ENCODE measurements at regions of chrX and their contacts with region 1.

Region 1: GRCh38 chrX:65841263-65841662 is 173.8 kb downstream of the MSN start:
- DNase-seq: no peak
- ATAC-seq: no peak
- H3K4me3 ChIP-seq: no peak overlapping the region
- H3K27ac ChIP-seq: no peak overlapping the region
- H3K4me1 ChIP-seq: no peaks in the 10 kb centered on the region
- H3K27me3 ChIP-seq: peaks cover 0 to 31% (median 0%) of the 10 kb centered on the region in 9 donors
- CTCF ChIP-seq: no peak
- POLR2A ChIP-seq: no peak

Region 2: DNA sequence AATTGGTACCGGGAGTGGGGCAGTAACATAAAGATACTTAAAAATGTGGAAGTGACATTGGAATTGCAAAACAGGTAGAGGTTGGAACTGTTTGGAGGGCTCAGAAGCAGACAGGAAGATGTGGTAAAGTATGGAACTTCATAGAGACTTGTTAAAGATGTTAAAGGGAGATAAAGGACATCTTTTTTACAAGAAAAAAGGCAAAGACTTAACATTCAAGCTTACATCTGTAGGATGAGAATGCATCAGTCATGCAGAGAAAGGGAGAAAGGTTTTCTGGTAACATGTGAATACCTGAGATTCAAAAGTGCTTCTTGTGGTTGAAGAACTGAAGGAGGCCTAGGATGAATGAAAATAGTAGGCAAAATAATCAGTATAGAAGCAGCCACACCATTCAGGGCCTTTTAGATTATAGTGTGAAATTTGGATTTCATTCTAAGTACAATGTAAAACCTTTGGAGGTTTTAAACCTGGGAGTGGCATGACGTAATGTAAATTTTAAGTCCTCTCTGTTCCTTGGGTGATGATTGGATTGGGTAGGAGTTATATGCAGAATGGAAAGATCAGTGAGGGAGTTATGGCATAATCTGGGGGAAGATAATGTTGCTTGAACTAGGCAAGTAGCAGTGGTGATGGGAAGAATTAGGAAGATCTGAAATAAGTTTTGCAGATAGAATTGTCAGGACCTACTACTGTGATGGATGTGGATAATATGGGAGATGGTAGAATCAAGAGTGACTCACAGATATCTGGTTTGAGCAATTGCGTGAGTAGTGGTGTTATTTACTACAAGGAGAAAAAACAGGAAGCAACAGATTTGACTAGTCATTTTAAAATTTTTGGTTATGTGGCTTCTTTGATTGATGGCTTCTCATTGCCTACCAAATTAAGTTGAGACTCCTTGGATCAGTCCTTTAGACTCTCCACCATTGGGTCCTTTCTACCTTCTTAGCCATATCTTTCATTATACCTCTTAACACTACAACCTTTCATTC is 59.9 kb after region 1 on chrX:
- intact Hi-C with region 1: loop called in 1 of 10 experiments (anchors 10 kb)
- DNase-seq: no peak
- ATAC-seq: no peak
- H3K4me3 ChIP-seq: no peak overlapping the region
- H3K27ac ChIP-seq: no peak overlapping the region
- H3K4me1 ChIP-seq: no peaks in the 10 kb centered on the region
- H3K27me3 ChIP-seq: peaks cover 0 to 53% (median 0%) of the 10 kb centered on the region in 9 donors
- CTCF ChIP-seq: no peak
- POLR2A ChIP-seq: no peak

Measured in heart left ventricle (tissue), 16 donors.